ENCODE measurements at regions of chr5 and their contacts with region 1.

Region 1: GRCh38 chr5:131068893-131069643 is 96.0 kb downstream of the HINT1 start:
- DNase-seq: peak; percentile 92
- H3K4me3 Mint-ChIP-seq: peak overlapping the region; percentile 80
- H3K27ac Mint-ChIP-seq: peak overlapping the region; percentile 96
- H3K4me1 Mint-ChIP-seq: peaks cover 49% of the 10 kb centered on the region
- H3K27me3 Mint-ChIP-seq: no peaks in the 10 kb centered on the region

Region 2: DNA sequence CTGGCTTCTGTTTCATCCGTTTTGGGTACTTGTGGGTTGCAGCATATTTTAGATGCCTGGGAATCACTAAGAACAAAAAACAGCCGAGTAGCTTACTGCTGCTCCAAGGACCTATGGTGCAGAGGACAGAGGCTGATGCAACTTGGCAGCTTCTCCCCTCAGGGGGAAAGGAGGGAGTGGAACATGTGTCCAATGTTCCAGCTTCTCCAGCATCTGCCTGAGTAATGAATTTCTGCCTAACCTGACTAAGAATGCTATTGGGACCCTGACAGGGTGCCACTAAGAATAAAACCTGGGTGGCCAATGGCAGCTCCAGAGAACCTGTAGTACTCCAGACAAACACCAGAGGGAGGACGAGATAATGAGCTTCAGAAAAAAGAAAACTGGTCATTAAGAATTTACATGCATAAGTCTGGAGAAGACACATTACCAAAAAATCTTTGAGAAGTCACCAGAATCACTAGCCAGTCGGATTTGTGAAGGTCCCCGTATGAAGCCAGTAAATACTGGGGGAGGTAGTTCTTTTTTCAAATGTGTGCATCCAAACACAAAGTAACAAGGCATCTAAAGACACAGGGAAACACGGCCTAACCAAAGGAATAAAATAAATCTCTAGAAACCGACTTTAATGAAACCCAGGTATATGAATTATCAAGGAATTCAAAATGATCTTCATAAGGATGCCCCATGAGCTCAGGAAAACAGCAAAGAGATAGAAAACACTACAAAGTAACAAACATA is 197.6 kb before region 1 on chr5:
- intact Hi-C with region 1: loop called (anchors 5 kb)
- DNase-seq: peak; percentile 84
- H3K4me3 Mint-ChIP-seq: no peak overlapping the region
- H3K27ac Mint-ChIP-seq: no peak overlapping the region
- H3K4me1 Mint-ChIP-seq: no peaks in the 10 kb centered on the region
- H3K27me3 Mint-ChIP-seq: no peaks in the 10 kb centered on the region

Region 3: DNA sequence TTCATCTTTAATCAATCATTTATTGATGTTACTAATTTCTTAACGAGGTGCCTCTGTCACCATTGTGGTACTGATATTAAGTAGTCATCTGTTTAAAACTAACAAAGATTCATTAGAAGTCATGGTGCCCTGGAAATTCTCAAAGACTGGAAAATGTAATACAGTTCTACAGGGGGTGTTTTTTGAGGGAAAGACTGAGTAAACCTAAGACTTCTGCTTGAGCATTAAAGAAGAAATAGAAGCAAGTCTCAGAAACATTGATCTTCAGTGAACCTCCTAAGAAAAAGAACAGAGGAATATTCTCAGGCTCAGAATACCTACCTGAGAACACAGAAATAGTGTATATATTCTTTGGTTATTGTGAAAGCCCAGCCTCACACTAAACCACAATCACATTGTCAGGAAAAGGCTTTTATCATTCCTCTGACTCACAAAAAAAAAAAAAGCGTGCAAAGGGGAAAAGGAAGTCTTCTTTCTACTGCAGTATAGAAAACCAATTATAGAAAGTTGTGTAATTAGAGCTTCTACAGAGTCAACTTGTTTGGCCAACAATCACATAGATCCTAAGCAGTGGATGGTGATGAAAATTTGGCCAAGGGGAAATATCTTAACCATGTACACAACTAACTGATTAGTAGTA is 35.2 kb after region 1 on chr5:
- intact Hi-C with region 1: loop called (anchors 2 kb)
- DNase-seq: no peak
- H3K4me3 Mint-ChIP-seq: no peak overlapping the region
- H3K27ac Mint-ChIP-seq: peak overlapping the region; percentile 27
- H3K4me1 Mint-ChIP-seq: peaks cover 14% of the 10 kb centered on the region
- H3K27me3 Mint-ChIP-seq: peaks cover 2% of the 10 kb centered on the region

Region 4: DNA sequence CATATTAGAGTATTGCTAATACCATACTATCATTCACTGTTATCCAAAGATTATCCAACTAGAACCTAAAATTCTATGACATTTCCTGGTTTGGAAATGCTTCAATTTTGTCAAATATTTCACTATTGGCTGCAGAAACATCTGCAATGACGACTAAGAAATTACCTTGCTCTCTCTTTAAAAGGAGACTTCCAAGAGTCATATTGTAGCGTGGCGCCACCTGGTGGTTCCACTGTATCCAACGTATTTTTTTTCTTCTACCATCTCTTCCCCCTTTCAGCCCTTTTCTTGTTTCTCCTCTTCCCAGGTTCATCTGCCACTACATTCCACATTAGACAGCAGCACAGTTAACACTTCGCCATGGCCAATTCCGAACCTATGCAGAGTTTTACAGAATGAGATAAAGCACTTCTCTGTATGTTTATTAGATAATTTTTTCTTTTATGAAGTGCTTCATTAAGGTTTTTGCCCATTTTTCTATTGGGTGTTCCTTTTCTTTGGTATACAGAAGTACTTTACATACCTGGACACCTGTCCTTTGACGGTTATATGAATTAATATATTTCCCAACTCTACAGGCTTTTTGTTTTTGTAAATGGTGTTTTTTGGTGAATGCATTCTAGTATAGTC is 348.3 kb after region 1 on chr5:
- intact Hi-C with region 1: loop called (anchors 5 kb)
- DNase-seq: peak; percentile 93
- H3K4me3 Mint-ChIP-seq: peak overlapping the region; percentile 46
- H3K27ac Mint-ChIP-seq: peak overlapping the region; percentile 39
- H3K4me1 Mint-ChIP-seq: peaks cover 40% of the 10 kb centered on the region
- H3K27me3 Mint-ChIP-seq: no peaks in the 10 kb centered on the region

Measured in activated CD4-positive, alpha-beta T cell treated with anti-CD3 and anti-CD28 coated beads, Interleukin-2, amount 10 ng/mL, durations not matched to agents 24 days and 14 days (primary cell).